Posterior vena cava (tissue), 2 donors: ENCODE measurements at regions of chr2 and their contacts with region 1.

Region 1: DNA sequence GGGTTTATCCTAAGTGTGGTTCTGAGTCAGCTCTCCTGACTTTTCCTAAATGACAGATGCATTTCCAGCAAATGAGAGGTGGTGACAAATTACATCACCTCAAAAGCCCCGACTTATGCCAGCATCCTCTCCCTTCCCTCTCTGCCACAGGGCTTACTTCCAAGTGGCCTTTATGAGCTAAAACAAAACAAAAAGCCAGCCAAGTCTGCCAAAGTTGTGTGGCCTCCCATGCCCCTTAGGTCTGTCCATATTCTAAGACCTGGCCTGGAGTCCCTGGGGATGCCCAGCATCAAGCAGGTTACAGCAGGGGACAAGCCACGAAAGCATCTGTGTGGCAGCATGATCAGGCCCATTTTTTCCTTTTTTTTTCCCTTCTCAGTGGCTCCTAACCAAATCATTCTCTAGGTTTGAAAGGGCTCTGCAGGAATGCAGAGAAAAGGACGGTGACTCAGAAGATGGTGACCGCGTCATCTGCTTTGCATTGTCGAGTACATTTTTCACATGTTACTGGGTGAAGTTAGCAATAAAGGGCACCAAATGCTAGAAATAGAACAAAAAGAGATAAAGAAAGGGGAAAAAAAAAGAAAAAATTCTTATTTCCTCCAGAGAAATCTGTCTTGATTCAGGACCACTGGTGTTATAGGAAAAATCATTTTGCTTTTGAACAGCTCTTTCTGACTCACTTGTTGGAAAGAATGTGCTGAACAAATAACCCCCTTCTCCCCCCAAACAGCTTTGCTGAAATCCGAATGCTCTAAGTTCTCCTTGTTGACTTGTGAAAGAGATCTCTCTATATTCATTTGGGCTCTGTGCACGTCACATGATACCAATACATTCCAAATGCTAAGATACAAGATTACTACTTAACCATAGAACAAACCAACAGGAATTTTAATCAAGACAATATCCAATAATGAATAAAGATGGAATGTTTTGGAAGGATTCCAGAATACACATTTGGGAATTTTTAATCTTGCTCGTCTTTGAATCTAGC is 178.7 kb downstream of the EN1 start:
- DNase-seq: peak; percentile 85

Region 2: GRCh38 chr2:118654945-118655344 is 13.8 kb before region 1 on chr2:
- intact Hi-C with region 1: no loop called
- DNase-seq: no peak

Region 3: GRCh38 chr2:119104414-119104813 is 435.7 kb after region 1 on chr2:
- intact Hi-C with region 1: loop called in 1 of 2 experiments (anchors 5 kb)
- DNase-seq: no peak